Activated CD4-positive, alpha-beta memory T cell treated with anti-CD3 and anti-CD28 coated beads, Interleukin-2, amount 10 ng/mL, durations not matched to agents 7 days and 5 days (primary cell): ENCODE measurements at regions of chr19 and their contacts with region 1.

Region 1: GRCh38 chr19:44093931-44094765 is at the start of gene ZNF224:
- DNase-seq: peak; percentile 88
- H3K4me3 Mint-ChIP-seq: peak within 1 kb of the TSS; percentile 94
- H3K27ac Mint-ChIP-seq: peak within 1 kb of the TSS; percentile 88
- H3K4me1 Mint-ChIP-seq: peaks cover 16% of the 10 kb centered on the region
- H3K27me3 Mint-ChIP-seq: no peaks in the 10 kb centered on the region
- total RNA-seq, gene ZNF224: 35.4 to 37.8 TPM

Region 2: DNA sequence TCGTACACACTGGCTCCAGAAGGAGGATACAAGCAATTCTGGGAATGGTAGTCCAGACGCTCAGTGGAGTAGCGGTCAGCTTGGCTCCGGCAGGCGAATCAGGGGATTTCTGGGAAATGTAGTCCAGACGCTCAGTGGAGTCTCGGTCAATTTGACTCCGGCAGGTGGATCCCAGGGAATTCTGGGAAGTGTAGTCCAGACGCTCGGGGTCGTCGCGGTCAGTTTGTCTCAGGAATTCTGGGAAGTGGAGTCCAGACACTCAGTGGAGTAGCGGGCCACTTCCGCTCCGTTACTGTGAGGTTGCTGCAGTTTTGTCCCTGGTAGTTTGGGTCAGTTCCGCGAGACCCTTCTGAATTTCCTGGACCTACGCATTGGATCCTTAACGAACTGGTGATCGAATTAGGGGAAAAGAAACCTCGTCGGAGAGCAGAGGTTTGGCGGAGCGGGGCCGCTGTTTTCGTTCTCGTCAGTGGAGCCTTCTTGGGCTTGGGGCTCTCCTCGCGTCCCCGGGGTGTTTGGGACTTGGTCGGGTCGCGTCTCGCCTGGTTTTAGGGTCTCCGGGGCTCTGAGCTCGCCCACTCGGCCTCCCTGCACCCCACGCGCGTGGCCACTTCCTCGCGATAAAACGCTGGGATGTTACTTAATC is 19.1 kb after region 1 on chr19 and contains the start of gene ZNF225:
- CTCF ChIA-PET with region 1: interaction called, 4 read pairs
- POLR2A ChIA-PET with region 1: interaction called, 15 read pairs
- DNase-seq: peak; percentile 87
- H3K4me3 Mint-ChIP-seq: peak within 1 kb of the TSS; percentile 95
- H3K27ac Mint-ChIP-seq: peak within 1 kb of the TSS; percentile 65
- H3K4me1 Mint-ChIP-seq: peaks cover 25% of the 10 kb centered on the region
- H3K27me3 Mint-ChIP-seq: no peaks in the 10 kb centered on the region
- total RNA-seq, gene ZNF225: 4.5 to 4.7 TPM

Region 3: DNA sequence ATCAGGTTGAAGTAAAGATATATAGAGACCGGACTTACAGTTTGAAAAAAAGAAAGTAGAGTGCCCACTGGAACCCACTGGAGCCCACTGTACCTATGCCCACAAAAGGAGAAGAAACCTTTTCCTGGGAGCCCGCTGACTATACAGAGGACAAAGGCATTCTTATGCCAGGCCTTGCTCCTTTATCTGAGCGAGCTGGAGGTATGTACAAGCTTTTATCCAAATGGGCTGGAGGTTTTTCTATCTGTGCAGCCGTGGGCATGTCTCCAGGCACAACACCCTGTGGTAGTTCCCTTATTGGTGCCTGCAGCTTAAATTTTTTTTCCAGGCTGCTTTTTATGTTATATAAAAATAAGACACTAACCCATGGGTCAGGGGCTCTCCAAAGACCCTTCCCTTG is 55.6 kb after region 1 on chr19:
- CTCF ChIA-PET with region 1: no interaction called
- POLR2A ChIA-PET with region 1: no interaction called
- DNase-seq: no peak
- H3K4me3 Mint-ChIP-seq: no peak overlapping the region
- H3K27ac Mint-ChIP-seq: no peak overlapping the region
- H3K4me1 Mint-ChIP-seq: no peaks in the 10 kb centered on the region
- H3K27me3 Mint-ChIP-seq: no peaks in the 10 kb centered on the region